ENCODE measurements at regions of chrX and their contacts with region 1.

Region 1: GRCh38 chrX:110418316-110419235 is 59.9 kb downstream of the RTL9 start:
- DNase-seq: peak; percentile 76

Region 2: DNA sequence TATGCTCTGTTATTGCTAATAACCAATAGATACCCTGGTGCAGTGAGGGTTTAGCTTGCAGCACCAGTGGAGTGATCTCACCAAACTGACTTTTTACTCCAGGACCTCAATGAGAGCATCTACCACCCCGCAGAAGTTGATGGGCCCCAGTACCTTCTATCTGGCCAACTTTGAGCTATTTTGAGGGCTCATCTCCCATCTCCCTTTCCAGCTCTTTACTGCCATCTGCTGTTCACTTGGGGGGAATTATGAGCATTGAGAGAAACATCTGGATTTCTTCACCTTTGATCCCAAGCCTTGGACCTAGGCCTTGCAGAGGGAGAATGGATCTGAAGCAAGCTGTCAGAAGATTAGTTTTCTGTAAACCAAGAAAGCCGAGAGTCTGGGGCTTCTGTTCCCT is 272.1 kb before region 1 on chrX:
- CTCF ChIA-PET with region 1: interaction called, 40 read pairs
- POLR2A ChIA-PET with region 1: interaction called, 3 read pairs
- DNase-seq: peak; percentile 75

Region 3: GRCh38 chrX:110156167-110156754 is 262.3 kb before region 1 on chrX:
- CTCF ChIA-PET with region 1: interaction called, 166 read pairs
- POLR2A ChIA-PET with region 1: interaction called, 7 read pairs
- DNase-seq: no peak

Region 4: GRCh38 chrX:110167952-110168451 is 250.6 kb before region 1 on chrX:
- CTCF ChIA-PET with region 1: interaction called, 93 read pairs
- POLR2A ChIA-PET with region 1: interaction called, 4 read pairs
- DNase-seq: peak; percentile 80

Region 5: GRCh38 chrX:110317820-110318658 is 100.5 kb before region 1 on chrX and contains the start of gene AMMECR1:
- CTCF ChIA-PET with region 1: interaction called, 4 read pairs
- POLR2A ChIA-PET with region 1: interaction called, 11 read pairs
- DNase-seq: peak; percentile 84

Region 6: DNA sequence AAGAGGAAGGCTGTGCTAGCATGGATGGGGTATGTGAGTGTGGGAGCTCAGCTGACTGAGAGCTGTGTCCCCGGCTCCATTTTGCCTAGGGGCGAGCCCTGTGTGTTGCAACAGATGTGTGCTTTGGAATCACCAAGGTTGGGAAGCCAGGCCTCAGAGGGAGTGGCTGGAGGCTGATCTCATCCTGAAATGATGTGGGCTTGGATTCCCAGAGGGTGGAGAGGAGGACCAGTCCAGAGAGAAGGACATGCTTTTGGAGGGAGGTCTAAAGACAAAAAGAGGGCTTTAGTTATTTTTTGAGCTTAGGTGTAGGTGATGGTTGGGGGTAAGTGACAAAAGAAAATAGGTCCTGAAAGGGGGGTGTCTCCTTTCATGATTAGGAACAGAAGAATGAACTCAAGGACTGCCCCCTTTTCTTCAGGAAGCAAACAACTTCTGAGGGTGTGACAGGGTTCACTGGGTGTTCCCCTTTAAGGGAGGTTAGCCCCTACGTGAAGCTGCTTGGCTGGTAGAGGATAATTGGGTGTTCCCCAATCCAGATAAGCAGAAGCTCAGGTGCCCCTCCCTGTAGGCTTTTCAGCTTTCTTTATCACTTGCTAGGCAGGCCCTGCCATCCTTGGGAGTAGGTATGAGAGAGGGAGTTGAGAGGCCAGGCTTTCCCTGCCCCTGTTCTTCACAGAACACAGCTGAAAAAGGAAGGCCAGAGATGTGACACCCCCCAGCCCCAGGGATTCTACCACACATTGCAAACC is 15.9 kb before region 1 on chrX:
- CTCF ChIA-PET with region 1: interaction called, 26 read pairs
- POLR2A ChIA-PET with region 1: interaction called, 3 read pairs
- DNase-seq: no peak

Region 7: GRCh38 chrX:110407910-110408545 is 10.5 kb before region 1 on chrX:
- CTCF ChIA-PET with region 1: interaction called, 26 read pairs
- POLR2A ChIA-PET with region 1: interaction called, 6 read pairs
- DNase-seq: peak; percentile 77

Region 8: DNA sequence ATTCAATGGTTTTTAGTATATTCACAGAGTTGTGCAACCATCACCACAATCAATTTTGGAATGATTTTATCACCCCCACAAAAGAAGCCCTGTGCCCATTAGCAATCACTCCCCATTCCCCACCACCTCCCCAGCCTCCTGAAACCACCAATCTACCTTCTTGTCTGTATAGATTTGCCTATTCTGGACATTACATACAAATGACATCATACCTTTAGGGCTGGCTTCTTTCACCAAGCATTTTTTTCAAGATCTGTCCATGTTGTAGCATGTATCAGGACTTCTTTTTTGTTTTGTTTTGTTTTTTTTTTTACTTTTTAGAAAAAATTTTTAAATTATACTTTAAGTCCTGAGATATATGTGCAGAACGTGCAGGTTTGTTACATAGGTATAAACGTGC is 48.2 kb after region 1 on chrX:
- CTCF ChIA-PET with region 1: no interaction called
- POLR2A ChIA-PET with region 1: no interaction called
- DNase-seq: no peak

Measured in HEK293T (cell line).